ENCODE measurements at regions of chr9 and their contacts with region 1.

Region 1: GRCh38 chr9:113275157-113276131 is at the starts of genes CDC26 and PRPF4:
- H3K4me3 ChIP-seq: peak within 1 kb of the TSS; percentile 85
- H3K27ac ChIP-seq: peak within 1 kb of the TSS; percentile 49
- H3K4me1 ChIP-seq: 0 out of 2 replicates have a peak, but pooled peaks cover 3% of the 10 kb centered on the region
- CTCF ChIP-seq: no peak

Region 2: DNA sequence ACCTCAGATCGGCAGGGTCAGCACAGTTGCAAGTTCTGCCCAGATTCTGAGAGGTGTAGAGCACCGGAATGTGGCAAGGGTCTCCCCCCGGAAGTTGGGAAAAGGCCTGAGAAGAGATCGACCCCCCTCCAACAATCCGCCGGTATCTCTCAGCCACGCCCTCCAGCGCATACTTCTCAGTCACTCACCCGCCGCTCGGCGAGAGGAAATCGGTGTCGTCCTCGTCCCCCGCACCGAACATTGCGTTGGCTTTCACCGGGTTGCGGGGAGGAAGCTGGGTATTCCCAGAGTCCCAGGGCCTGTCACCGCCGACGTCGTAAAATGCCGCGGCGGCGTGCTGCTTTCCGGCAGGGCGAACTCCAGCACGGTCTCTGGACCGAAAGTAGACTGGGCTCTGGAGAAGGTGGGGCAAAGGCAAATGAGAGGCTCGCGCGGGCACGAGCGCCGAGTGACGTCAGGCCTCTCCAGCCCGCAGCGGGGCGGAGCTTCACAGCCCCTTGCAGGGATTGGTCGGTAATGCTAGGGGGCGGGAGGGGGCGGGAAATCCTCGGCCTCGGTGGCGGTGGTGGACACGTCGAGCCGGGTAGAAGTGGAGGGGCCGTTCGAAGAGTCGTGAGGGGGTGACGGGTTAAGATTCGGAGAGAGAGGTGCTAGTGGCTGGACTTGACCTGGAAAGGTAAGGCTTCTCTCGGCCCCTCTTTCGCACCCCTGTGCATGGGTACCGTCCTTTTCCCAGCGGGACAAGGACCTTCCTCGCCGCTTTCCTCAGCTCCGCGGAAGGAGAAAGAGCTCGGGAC is 54.2 kb before region 1 on chr9 and contains the starts of genes FKBP15 and SLC31A1:
- CTCF ChIA-PET with region 1: interaction called, 19 read pairs
- POLR2A ChIA-PET with region 1: interaction called, 44 read pairs
- H3K4me3 ChIP-seq: peak within 1 kb of the TSS; percentile 80
- H3K27ac ChIP-seq: peak within 1 kb of the TSS; percentile 48
- H3K4me1 ChIP-seq: 0 out of 2 replicates have a peak, but pooled peaks cover 3% of the 10 kb centered on the region
- CTCF ChIP-seq: no peak

Region 3: GRCh38 chr9:113340017-113340699 is 64.7 kb after region 1 on chr9 and contains the start of gene WDR31:
- CTCF ChIA-PET with region 1: interaction called, 5 read pairs
- POLR2A ChIA-PET with region 1: interaction called, 22 read pairs
- H3K4me3 ChIP-seq: peak within 1 kb of the TSS; percentile 82
- H3K27ac ChIP-seq: peak within 1 kb of the TSS; percentile 57
- H3K4me1 ChIP-seq: 0 out of 2 replicates have a peak, but pooled peaks cover 4% of the 10 kb centered on the region
- CTCF ChIP-seq: 0 out of 2 replicates have a peak, but pooled peaks have one; percentile 18

Region 4: DNA sequence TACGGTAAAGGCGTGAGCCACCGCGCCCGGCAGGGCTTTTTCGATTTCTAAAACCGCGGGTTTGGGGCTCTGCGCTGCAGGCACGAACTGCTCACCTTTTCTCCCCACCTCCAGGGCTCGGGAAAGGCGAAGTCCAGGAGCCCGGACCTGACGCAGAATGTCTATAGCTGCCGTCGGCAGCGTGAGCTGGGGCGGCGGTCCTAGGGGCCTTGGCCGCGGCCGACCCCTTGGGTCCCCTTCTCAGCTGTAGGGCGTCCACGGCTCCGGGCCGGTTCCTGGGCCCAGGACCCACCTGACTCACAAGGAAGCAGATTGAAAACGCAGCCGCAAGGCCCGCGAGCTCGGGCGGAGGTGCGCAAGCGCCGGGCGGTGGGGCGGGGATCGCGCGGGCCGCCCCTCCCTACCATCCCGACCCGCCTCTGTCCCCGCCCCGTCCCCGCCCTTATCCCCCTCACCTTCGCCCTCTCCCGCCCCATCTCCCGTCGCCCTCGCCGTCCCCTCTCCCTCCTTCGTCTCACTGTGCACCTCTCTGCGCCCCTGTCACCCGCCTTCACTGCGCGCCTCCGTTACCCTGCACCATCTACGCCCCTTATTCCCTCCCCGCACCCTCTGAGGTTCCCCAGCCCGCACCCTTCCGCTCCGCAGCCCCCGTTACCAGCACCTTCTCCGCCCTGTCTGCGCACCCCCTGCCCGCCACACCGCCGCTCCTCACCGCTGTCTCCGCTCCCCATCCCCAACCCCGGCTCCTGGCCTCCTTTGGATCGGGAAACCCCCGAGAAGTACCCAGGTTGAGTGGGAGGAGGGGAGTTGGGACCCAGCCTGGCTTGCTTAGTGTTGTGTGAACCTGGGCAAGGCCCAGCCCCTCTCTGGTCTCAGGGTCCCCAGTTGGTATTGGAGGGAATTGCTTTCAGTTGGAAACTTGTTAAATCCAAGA is 101.5 kb after region 1 on chr9 and contains the start of gene HDHD3:
- CTCF ChIA-PET with region 1: no interaction called
- POLR2A ChIA-PET with region 1: interaction called, 15 read pairs
- H3K4me3 ChIP-seq: peak within 1 kb of the TSS; percentile 64
- H3K27ac ChIP-seq: peak within 1 kb of the TSS; percentile 81
- H3K4me1 ChIP-seq: peaks cover 3% of the 10 kb centered on the region; the same call in 1 of the 2 replicates
- CTCF ChIP-seq: no peak

Region 5: DNA sequence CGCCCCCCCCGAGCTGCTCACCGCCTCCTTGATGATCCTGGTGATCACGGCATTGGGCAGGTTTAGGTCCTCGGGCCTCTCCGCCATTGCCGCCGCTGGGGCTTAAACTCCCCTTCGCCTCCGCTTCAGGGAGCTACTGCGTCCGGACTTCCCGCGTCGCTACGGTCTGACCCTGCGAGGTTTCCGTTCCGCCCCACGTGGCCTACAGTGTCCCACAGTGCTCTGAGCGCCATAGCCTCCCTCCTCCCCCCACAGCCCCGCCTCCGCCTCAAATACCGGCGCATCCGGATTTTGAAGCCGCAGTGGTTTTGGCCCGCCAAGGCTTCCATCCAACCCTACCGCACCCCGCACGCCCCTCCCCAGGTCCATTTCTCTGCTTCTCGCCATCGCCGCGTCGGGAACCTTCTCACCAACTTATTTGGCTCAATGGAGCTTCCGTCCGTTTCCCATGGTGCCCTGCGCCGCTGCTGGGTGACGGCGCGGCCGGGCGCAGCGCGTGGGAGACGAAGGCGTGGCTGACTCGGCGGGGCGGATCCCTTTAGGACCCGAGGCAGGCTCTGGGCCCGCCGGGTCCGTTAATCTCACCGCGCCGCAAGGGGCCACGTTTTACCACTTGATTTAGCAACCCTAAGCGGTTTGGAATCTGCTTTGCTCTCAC is 134.9 kb after region 1 on chr9 and contains the starts of genes C9orf43 and POLE3:
- CTCF ChIA-PET with region 1: interaction called, 26 read pairs
- POLR2A ChIA-PET with region 1: interaction called, 37 read pairs
- H3K4me3 ChIP-seq: peak within 1 kb of the TSS; percentile 62
- H3K27ac ChIP-seq: peak within 1 kb of the TSS; percentile 67
- H3K4me1 ChIP-seq: peaks cover 6% of the 10 kb centered on the region; the same call in 1 of the 2 replicates
- CTCF ChIP-seq: no peak

Region 6: GRCh38 chr9:113591001-113591898 is 315.8 kb after region 1 on chr9:
- CTCF ChIA-PET with region 1: interaction called, 23 read pairs
- POLR2A ChIA-PET with region 1: no interaction called
- H3K4me3 ChIP-seq: no peak overlapping the region
- H3K27ac ChIP-seq: no peak overlapping the region
- H3K4me1 ChIP-seq: no peaks in the 10 kb centered on the region
- CTCF ChIP-seq: peak; percentile 63